ENCODE measurements at regions of chr5 and their contacts with region 1.

Region 1: GRCh38 chr5:31863991-31864411 is 225.1 kb downstream of the PDZD2 start:
- DNase-seq: no peak
- ATAC-seq: no peak
- H3K4me3 Mint-ChIP-seq: peak overlapping the region in 4 of 10 donors; percentile 10 to 59 (median 31)
- H3K27ac Mint-ChIP-seq: peak overlapping the region in 8 of 10 donors; percentile 30 to 76 (median 60)
- H3K4me1 Mint-ChIP-seq: peaks cover 24 to 72% (median 42%) of the 10 kb centered on the region in 4 donors
- H3K27me3 Mint-ChIP-seq: peaks cover 0 to 4% (median 0%) of the 10 kb centered on the region in 5 donors

Region 2: GRCh38 chr5:31823472-31823871 is 40.5 kb before region 1 on chr5:
- POLR2A ChIA-PET with region 1: no interaction called
- DNase-seq: no peak
- ATAC-seq: no peak
- H3K4me3 Mint-ChIP-seq: no peak overlapping the region
- H3K27ac Mint-ChIP-seq: peak overlapping the region in 1 of 10 donors; percentile 40
- H3K4me1 Mint-ChIP-seq: peaks cover 0 to 8% (median 5%) of the 10 kb centered on the region in 4 donors
- H3K27me3 Mint-ChIP-seq: peaks cover 3 to 21% (median 7%) of the 10 kb centered on the region in 5 donors

Region 3: DNA sequence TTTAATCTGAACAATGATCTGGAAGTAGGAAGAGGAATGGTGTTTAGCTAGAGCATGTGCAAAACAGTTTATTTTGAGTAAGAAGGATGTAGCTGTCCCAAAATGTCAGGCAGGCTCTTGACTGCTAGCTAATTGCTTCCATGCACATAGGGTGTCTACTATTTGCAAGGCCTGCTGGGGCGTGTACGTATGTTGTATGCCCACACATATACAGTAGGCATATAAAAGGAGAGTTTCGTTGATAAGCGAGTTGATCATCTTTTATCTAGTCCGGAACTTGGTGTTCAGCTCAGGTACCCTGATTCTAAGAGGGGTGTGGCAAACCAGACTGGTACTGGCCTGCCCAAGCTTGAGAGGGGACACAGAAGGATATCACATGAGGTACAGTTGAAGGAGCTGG is 132.9 kb after region 1 on chr5:
- POLR2A ChIA-PET with region 1: interaction called, 10 read pairs
- DNase-seq: no peak
- ATAC-seq: no peak
- H3K4me3 Mint-ChIP-seq: no peak overlapping the region
- H3K27ac Mint-ChIP-seq: peak overlapping the region in 2 of 10 donors; percentile 7 to 70
- H3K4me1 Mint-ChIP-seq: peaks cover 9 to 29% (median 10%) of the 10 kb centered on the region in 4 donors
- H3K27me3 Mint-ChIP-seq: no peaks in the 10 kb centered on the region